ENCODE measurements at regions of chr20 and their contacts with region 1.

Region 1: DNA sequence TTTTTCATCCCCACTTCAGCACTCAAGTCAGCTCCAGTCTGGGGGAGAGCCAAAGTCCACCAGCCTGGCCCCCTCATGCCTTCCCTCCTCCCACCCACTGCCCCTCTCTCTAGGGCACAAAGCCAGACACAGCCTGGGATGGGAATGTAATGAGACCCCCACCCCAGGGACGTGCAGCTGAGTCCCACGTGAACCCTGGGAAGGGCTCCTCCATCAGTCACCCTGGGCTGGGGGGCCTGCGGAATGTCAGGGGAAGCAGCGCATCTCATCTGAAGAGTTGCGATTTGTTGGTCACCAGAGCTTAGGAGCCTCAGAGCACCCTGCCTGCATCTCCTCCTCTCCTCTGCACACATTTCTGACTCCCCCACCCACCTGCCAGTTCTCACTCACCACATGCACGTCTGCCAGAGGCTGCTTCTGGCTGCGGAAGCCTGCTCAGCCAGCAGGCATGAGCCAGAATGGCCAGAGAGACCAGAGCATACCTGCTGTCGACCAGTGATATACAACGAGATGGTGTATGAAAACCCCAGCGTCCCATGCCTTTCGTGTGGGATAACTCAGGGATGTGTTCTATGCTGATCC is 167.1 kb upstream of the TOP1 start:
- DNase-seq: no peak
- H3K4me3 ChIP-seq: no peak overlapping the region
- H3K4me3 Mint-ChIP-seq: no peak overlapping the region
- H3K27ac Mint-ChIP-seq: no peak overlapping the region
- H3K4me1 ChIP-seq: peaks cover 8% of the 10 kb centered on the region; the same call in 1 of the 2 replicates
- H3K4me1 Mint-ChIP-seq: no peaks in the 10 kb centered on the region
- H3K27me3 ChIP-seq: no peaks in the 10 kb centered on the region
- H3K27me3 Mint-ChIP-seq: peaks cover 19% of the 10 kb centered on the region
- CTCF ChIP-seq: no peak

Region 2: GRCh38 chr20:40676491-40677269 is 184.8 kb before region 1 on chr20:
- CTCF ChIA-PET with region 1: interaction called, 11 read pairs
- POLR2A ChIA-PET with region 1: no interaction called
- intact Hi-C with region 1: no loop called
- DNase-seq: no peak
- H3K4me3 ChIP-seq: no peak overlapping the region
- H3K4me3 Mint-ChIP-seq: no peak overlapping the region
- H3K27ac Mint-ChIP-seq: no peak overlapping the region
- H3K4me1 ChIP-seq: no peaks in the 10 kb centered on the region; the same call in 1 of the 2 replicates
- H3K4me1 Mint-ChIP-seq: peaks cover 7% of the 10 kb centered on the region
- H3K27me3 ChIP-seq: peaks cover 2% of the 10 kb centered on the region
- H3K27me3 Mint-ChIP-seq: peaks cover 12% of the 10 kb centered on the region
- CTCF ChIP-seq: no peak

Region 3: GRCh38 chr20:40741507-40742106 is 119.9 kb before region 1 on chr20:
- CTCF ChIA-PET with region 1: no interaction called
- POLR2A ChIA-PET with region 1: no interaction called
- intact Hi-C with region 1: no loop called
- DNase-seq: peak; percentile 74 to 82
- H3K4me3 ChIP-seq: no peak overlapping the region
- H3K4me3 Mint-ChIP-seq: no peak overlapping the region
- H3K27ac Mint-ChIP-seq: no peak overlapping the region
- H3K4me1 ChIP-seq: no peaks in the 10 kb centered on the region
- H3K4me1 Mint-ChIP-seq: no peaks in the 10 kb centered on the region
- H3K27me3 ChIP-seq: no peaks in the 10 kb centered on the region; the same call in 1 of the 2 replicates
- H3K27me3 Mint-ChIP-seq: peaks cover 35% of the 10 kb centered on the region
- CTCF ChIP-seq: peak; percentile 91 to 96

Region 4: GRCh38 chr20:40896814-40897700 is 35.5 kb after region 1 on chr20:
- CTCF ChIA-PET with region 1: no interaction called
- POLR2A ChIA-PET with region 1: no interaction called
- intact Hi-C with region 1: no loop called
- DNase-seq: no peak
- H3K4me3 ChIP-seq: no peak overlapping the region
- H3K4me3 Mint-ChIP-seq: no peak overlapping the region
- H3K27ac Mint-ChIP-seq: no peak overlapping the region
- H3K4me1 ChIP-seq: no peaks in the 10 kb centered on the region
- H3K4me1 Mint-ChIP-seq: no peaks in the 10 kb centered on the region
- H3K27me3 ChIP-seq: no peaks in the 10 kb centered on the region
- H3K27me3 Mint-ChIP-seq: peaks cover 22% of the 10 kb centered on the region
- CTCF ChIP-seq: no peak

Region 5: GRCh38 chr20:41261790-41262717 is 400.5 kb after region 1 on chr20:
- CTCF ChIA-PET with region 1: no interaction called
- POLR2A ChIA-PET with region 1: no interaction called
- intact Hi-C with region 1: no loop called
- DNase-seq: no peak
- H3K4me3 ChIP-seq: no peak overlapping the region
- H3K4me3 Mint-ChIP-seq: no peak overlapping the region
- H3K27ac Mint-ChIP-seq: no peak overlapping the region
- H3K4me1 ChIP-seq: no peaks in the 10 kb centered on the region
- H3K4me1 Mint-ChIP-seq: no peaks in the 10 kb centered on the region
- H3K27me3 ChIP-seq: no peaks in the 10 kb centered on the region
- H3K27me3 Mint-ChIP-seq: no peaks in the 10 kb centered on the region
- CTCF ChIP-seq: no peak

Measured in Caco-2 (cell line).